ENCODE measurements at regions of chr12 and their contacts with region 1.

Region 1: DNA sequence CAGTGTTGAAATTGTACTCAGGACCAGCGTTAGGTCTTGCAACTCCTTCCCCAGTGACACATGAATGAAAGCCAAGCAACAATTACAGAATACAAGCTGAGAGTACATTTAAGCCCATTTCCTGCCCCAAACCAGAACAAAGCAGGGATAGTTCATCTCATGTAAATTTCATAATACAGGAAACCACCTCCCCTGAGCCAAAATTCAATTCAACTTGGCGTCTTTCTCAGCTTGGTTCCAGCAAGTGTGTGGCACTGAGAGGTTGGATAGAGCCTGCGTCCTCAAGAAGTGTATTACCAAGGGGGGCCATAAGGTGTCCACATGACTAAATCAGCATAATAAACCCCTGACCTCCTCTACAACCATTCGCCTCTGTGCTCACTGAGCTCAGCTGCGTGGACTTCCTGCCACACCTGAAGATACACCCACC is 278.9 kb upstream of the CRY1 start:
- DNase-seq: peak; percentile 89
- H3K4me3 ChIP-seq: no peak overlapping the region
- H3K27ac ChIP-seq: peak overlapping the region; percentile 47
- H3K4me1 ChIP-seq: peaks cover 18% of the 10 kb centered on the region
- H3K27me3 ChIP-seq: no peaks in the 10 kb centered on the region
- CTCF ChIP-seq: peak in 1 of 2 donors; percentile 11

Region 2: DNA sequence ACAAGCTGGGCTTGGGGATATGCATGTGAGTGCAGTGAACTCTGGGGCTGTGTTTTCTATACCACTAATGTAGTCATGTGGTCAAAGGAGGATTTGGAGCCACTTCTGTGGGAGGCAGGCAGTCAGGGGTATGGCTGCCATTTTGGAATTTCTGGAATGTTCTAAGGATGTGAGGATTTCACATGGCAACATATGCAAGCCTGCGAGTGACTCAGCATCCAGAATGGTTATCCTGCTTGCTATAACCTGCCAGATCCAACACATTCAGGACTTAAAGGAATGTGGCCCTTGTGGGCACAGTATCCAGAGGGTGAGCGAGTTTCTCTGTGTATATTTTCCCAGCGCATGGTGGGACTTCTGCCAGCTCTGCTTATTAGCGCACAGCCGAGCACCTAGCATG is 64.1 kb after region 1 on chr12:
- CTCF ChIA-PET with region 1: no interaction called
- dilution Hi-C with region 1: loop called (anchors 5 kb)
- in situ Hi-C with region 1: no loop called
- intact Hi-C with region 1: no loop called
- DNase-seq: peak; percentile 89
- H3K4me3 ChIP-seq: no peak overlapping the region
- H3K27ac ChIP-seq: peak overlapping the region; percentile 37
- H3K4me1 ChIP-seq: peaks cover 34% of the 10 kb centered on the region
- H3K27me3 ChIP-seq: no peaks in the 10 kb centered on the region
- CTCF ChIP-seq: no peak

Region 3: DNA sequence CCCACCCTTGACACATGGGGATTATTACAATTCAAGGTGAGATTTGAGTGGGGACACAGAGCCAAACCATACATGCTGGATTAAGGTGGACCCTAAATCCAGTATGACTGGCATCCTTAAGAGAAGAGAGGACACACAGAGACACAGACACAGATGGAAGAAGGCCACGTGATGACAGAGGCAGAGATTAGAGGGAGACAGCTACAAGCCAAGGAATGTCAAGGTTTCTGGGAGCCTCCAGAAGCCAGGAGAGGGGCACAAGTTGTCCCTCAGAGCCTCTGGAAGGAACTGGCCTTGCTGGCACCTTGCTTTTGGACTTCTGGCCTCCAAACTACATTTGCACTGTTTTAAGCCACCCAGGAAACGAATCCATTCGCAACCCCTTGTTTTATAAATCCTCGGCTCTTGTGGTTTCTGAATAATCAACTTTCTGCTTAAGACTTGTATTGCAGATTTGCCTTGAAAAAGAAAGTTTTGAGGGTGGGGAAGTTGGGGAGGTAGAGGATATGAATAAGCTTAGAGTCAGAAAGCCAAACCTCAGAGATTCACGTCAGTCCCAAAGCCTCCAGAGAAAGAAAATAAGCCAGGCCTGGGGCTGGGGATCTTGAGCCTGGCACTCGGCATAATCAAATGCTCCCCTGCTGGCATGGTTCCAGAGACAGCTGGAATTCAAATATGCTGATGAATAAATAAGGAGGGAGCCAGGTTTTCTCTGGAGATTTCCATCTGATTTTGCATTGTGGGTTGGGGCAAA is 89.2 kb after region 1 on chr12:
- CTCF ChIA-PET with region 1: no interaction called
- dilution Hi-C with region 1: loop called (anchors 5 kb)
- in situ Hi-C with region 1: no loop called
- intact Hi-C with region 1: no loop called
- DNase-seq: peak; percentile 91
- H3K4me3 ChIP-seq: no peak overlapping the region
- H3K27ac ChIP-seq: peak overlapping the region; percentile 70
- H3K4me1 ChIP-seq: peaks cover 22% of the 10 kb centered on the region
- H3K27me3 ChIP-seq: no peaks in the 10 kb centered on the region
- CTCF ChIP-seq: no peak